PC-9 (cell line): ENCODE measurements at regions of chr12 and their contacts with region 1.

Region 1: GRCh38 chr12:53065975-53066931 is 12.9 kb downstream of the SPRYD3 start:
- DNase-seq: peak; percentile 53 to 74
- H3K4me3 ChIP-seq: no peak overlapping the region
- H3K27ac ChIP-seq: peak overlapping the region; percentile 50; the same call in 1 of the 2 replicates
- H3K4me1 ChIP-seq: peaks cover 25% of the 10 kb centered on the region
- H3K27me3 ChIP-seq: no peaks in the 10 kb centered on the region
- CTCF ChIP-seq: peak; percentile 91

Region 2: DNA sequence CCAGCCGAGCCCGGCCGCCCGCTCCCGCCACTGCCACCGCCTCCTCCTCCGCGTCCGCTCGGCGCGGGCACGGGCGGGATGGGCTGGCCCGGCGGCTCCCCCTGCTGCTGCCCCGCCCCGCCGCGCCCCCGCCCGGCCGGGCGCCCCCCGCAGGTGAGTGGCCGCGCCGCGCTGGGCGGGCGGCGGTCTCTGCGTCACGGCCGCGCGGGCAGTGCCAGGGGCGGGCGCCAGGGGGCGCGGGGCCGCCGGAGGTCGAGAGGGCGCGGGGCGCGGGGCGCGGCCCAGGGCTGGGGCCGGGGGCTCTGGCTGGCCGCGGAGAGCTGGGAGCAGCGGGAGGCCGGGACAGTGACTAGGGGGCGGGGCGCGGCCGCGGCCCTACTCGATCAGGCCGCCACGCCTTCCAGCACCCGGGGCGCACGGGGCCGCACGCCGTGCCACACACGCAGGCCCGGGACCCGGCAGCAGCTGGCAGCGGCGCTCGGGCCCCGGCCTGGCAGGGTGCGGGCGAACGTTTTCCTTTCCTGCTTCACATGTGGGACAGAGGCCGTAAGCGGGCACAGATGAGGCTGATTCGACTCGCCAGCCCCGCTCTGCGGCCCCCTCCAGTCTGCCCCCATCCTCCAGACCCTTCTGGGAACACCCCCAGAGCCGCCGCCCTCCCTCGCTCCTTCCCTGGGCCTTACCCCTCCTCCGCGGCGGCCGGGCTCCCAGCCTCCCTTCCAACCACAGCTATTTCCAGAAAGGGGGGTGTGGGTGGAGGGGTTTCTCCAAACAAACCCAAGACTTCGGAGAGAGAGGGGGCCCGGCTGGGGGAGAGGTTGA is 18.8 kb before region 1 on chr12:
- CTCF ChIA-PET with region 1: interaction called, 14 read pairs
- POLR2A ChIA-PET with region 1: interaction called, 3 read pairs
- intact Hi-C with region 1: no loop called
- DNase-seq: peak in 1 of 2 experiments; percentile 86
- H3K4me3 ChIP-seq: no peak overlapping the region; the same call in 1 of the 2 replicates
- H3K27ac ChIP-seq: peak overlapping the region; percentile 36; the same call in 1 of the 2 replicates
- H3K4me1 ChIP-seq: peaks cover 25% of the 10 kb centered on the region
- H3K27me3 ChIP-seq: no peaks in the 10 kb centered on the region
- CTCF ChIP-seq: peak; percentile 42

Region 3: GRCh38 chr12:53098982-53099651 is 32.9 kb after region 1 on chr12:
- CTCF ChIA-PET with region 1: interaction called, 22 read pairs
- POLR2A ChIA-PET with region 1: interaction called, 3 read pairs
- intact Hi-C with region 1: loop called (anchors 1 kb)
- DNase-seq: peak; percentile 90 to 92
- H3K4me3 ChIP-seq: peak overlapping the region; percentile 96
- H3K27ac ChIP-seq: peak overlapping the region; percentile 87
- H3K4me1 ChIP-seq: peaks cover 22% of the 10 kb centered on the region
- H3K27me3 ChIP-seq: no peaks in the 10 kb centered on the region
- CTCF ChIP-seq: peak; percentile 95

Region 4: DNA sequence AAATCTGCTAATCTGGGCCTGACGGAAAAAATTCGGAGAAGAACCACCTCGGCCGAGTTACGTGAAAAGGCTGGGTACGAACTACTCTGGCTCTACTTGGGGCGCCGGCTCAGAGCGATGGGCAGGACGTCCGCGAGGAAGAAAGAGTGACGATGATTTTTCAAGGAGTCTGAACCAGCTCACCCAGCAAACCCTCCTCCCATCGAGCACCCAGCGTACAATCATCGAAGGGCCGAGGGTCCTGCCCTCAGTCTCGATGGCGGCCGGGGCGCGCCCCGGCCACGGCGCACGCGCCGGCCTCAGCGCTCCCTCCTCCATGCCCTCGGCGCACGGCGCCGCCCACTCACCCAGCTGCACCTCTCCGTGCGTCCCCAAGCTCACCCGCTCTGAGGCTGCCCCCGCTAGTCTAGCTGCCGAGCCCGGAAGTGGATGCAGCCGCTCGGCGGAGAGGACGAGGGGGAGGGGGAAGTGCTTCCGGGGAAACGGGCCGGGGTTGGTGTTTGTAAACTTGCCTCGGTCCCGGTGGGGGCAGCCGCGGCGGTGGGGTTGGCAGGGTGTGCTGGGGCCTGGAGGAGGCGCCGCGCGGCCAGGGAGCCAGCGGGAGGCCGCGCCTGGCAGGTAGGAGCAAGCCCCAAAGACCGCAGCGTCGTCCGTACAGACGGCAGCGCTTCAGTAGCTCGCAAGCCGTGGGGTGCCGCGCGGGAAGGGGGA is 114.1 kb after region 1 on chr12 and contains the starts of genes CSAD and ZNF740:
- CTCF ChIA-PET with region 1: interaction called, 3 read pairs
- POLR2A ChIA-PET with region 1: interaction called, 10 read pairs
- intact Hi-C with region 1: loop called (anchors 10 kb)
- DNase-seq: peak; percentile 90 to 97
- H3K4me3 ChIP-seq: peak within 1 kb of the TSS; percentile 61
- H3K27ac ChIP-seq: peak within 1 kb of the TSS; percentile 74
- H3K4me1 ChIP-seq: peaks cover 34% of the 10 kb centered on the region
- H3K27me3 ChIP-seq: no peaks in the 10 kb centered on the region
- CTCF ChIP-seq: no peak
- total RNA-seq, gene CSAD: 33.1 and 49.0 TPM in 2 replicates
- total RNA-seq, gene ZNF740: 48.3 and 65.8 TPM in 2 replicates

Region 5: GRCh38 chr12:53287741-53288216 is 221.5 kb after region 1 on chr12:
- CTCF ChIA-PET with region 1: interaction called, 4 read pairs
- POLR2A ChIA-PET with region 1: no interaction called
- intact Hi-C with region 1: loop called (anchors 1 kb)
- DNase-seq: peak; percentile 40 to 56
- H3K4me3 ChIP-seq: no peak overlapping the region
- H3K27ac ChIP-seq: no peak overlapping the region
- H3K4me1 ChIP-seq: no peaks in the 10 kb centered on the region
- H3K27me3 ChIP-seq: no peaks in the 10 kb centered on the region
- CTCF ChIP-seq: peak; percentile 77